Common myeloid progenitor, CD34-positive (primary cell): ENCODE measurements at regions of chr5 and their contacts with region 1.

Region 1: DNA sequence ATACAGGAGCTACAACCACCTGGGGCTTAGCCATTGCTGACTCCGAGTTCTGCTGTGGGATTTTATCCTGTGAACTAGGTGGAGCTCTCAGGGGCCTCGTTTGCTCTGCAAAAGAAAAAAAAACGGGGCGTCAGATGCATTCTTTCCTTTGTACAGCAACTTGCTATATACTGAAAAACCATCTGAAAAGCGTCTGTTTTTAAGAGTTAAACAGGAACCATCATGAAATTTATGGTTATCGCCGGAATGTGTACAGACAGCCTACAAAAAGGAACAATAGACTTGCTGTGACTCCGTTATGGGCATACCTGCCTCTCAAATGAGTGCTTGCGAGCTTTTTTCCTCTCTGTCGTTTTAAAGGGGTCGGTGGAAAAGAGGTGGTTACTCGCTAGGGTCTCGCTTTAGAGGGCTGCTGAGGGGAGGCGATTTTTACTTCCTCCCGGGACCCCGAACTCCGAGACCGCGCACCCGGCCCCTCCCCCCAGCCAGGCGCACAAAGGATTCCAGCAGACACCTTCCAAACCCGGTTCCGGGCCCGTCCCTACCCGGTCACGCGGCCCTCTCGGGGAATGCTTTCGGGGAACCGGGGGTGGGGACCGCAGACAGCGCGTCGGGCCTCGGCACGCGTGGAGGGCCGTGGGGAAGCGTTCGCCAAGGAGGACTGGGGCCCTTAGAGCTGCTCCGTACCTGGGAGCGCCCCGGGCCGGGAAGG is 826 bp downstream of the PAIP1 start:
- DNase-seq: peak; percentile 22 to 71 (median 54)
- H3K4me3 ChIP-seq: peak overlapping the region; percentile 84 to 98 (median 96)
- H3K27ac ChIP-seq: peak overlapping the region; percentile 88 to 95
- H3K4me1 ChIP-seq: peaks cover 7 to 42% (median 25%) of the 10 kb centered on the region in 4 experiments
- H3K27me3 ChIP-seq: no peaks in the 10 kb centered on the region

Region 2: GRCh38 chr5:43386960-43387362 is 169.1 kb before region 1 on chr5:
- CTCF ChIA-PET with region 1: no interaction called
- POLR2A ChIA-PET with region 1: no interaction called
- DNase-seq: no peak
- H3K4me3 ChIP-seq: no peak overlapping the region
- H3K27ac ChIP-seq: no peak overlapping the region
- H3K4me1 ChIP-seq: peaks cover 0 to 6% (median 0%) of the 10 kb centered on the region in 4 experiments
- H3K27me3 ChIP-seq: no peaks in the 10 kb centered on the region

Region 3: GRCh38 chr5:43543434-43543833 is 12.6 kb before region 1 on chr5:
- CTCF ChIA-PET with region 1: interaction called, 37 read pairs
- POLR2A ChIA-PET with region 1: interaction called, 3 read pairs
- DNase-seq: no peak
- H3K4me3 ChIP-seq: no peak overlapping the region
- H3K27ac ChIP-seq: peak overlapping the region in 1 of 2 experiments; percentile 39
- H3K4me1 ChIP-seq: no peaks in the 10 kb centered on the region
- H3K27me3 ChIP-seq: no peaks in the 10 kb centered on the region